ENCODE measurements at regions of chr20 and their contacts with region 1.

Region 1: DNA sequence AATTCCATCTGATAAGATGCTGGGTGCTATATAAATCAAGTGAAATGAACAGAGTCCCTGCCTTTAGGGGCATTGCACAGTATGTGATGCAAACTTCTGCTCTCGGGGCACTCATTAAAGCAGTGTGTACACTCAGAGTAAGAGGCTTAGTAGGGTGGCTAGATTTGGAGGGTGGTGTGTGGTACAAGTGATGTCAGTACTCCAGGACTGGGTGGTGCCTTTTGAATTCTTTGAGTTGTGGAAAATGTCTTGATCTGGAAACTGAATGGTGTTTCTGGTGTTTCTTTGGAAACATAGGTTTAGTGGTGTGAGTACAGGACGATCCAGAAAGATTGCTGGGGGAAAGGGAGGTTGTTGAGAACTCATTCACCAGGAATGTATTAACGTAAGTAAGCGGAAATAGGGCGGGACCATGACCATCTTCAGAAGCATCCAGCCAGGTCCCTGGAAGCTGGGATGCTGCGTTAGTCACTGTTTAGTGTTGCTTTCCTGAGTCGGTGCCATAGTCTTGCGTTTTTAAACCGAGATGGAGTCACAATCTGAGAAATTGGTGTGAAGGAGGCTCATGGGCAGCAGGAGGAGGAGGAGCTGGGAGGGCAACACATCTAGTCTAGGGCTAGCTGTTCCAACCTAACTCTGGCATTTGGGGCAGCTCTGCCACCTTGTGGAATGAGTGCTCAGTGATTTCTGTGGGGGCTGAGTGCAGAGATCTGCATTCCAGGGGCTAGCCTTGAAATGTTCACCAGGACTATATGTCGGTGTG is 70.3 kb downstream of the SCAND1 start:
- DNase-seq: peak; percentile 85
- ATAC-seq: peak; percentile 95
- H3K4me3 ChIP-seq: peak overlapping the region; percentile 15 to 45; a peak in 3 of 4 replicates
- H3K27ac ChIP-seq: peak overlapping the region; percentile 48; the same call in 1 of the 2 replicates
- H3K4me1 ChIP-seq: peaks cover 9 to 29% of the 10 kb centered on the region in 2 experiments
- H3K27me3 ChIP-seq: no peaks in the 10 kb centered on the region
- CTCF ChIP-seq: peak; percentile 63 to 84 (median 83); a peak in 5 of 6 replicates
- POLR2A ChIP-seq: no peak
- RAD21 ChIP-seq: peak; percentile 89

Region 2: DNA sequence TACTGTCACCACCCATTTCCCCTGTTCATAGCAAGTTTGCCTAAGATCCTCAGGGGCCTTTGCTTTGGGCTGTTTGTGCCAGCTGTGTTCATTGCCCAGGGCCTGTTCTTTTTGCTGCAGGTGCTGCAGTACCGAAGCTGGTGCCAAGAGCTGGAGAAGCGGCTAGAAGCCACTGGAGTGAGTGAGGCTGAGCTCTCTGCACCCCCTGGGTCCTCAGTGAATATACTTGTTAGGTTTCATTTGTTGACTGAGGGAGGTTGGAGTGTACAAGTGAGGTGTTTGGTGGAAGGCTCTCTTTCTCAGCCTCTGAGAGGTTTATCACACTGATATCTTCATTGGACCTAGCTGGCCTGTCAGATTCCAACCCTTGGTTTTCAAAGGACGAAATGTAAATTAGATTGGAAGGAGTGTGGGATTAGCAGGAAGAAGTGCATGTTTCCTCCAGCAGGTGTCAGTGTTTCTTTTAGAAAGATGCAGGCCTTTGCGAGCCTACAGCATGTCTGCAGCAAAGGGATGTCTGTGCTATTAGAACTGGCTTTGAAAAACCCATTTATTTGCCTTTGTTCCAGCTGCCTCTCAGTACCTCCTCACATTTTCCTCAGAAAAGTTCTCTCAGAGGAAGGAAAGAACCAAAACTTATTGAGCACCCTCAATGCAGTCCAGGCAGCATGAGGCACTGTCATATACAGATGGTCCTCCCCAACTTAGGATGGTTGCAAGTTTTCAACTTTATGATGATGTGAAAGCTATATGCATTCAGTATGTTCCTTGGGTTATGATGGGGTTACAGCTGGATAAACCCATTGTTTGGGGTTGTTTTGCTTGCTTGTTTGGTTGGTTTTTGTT is 420.3 kb before region 1 on chr20:
- CTCF ChIA-PET with region 1: interaction called, 3 read pairs
- POLR2A ChIA-PET with region 1: no interaction called
- RAD21 ChIA-PET with region 1: no interaction called
- intact Hi-C with region 1: loop called (anchors 5 kb)
- DNase-seq: peak; percentile 40
- ATAC-seq: peak; percentile 87
- H3K4me3 ChIP-seq: no peak overlapping the region
- H3K27ac ChIP-seq: no peak overlapping the region
- H3K4me1 ChIP-seq: peaks cover 21 to 22% of the 10 kb centered on the region in 2 experiments
- H3K27me3 ChIP-seq: no peaks in the 10 kb centered on the region
- CTCF ChIP-seq: peak; percentile 52 to 88 (median 75); a peak in 5 of 6 replicates
- POLR2A ChIP-seq: no peak
- RAD21 ChIP-seq: peak; percentile 77

Region 3: DNA sequence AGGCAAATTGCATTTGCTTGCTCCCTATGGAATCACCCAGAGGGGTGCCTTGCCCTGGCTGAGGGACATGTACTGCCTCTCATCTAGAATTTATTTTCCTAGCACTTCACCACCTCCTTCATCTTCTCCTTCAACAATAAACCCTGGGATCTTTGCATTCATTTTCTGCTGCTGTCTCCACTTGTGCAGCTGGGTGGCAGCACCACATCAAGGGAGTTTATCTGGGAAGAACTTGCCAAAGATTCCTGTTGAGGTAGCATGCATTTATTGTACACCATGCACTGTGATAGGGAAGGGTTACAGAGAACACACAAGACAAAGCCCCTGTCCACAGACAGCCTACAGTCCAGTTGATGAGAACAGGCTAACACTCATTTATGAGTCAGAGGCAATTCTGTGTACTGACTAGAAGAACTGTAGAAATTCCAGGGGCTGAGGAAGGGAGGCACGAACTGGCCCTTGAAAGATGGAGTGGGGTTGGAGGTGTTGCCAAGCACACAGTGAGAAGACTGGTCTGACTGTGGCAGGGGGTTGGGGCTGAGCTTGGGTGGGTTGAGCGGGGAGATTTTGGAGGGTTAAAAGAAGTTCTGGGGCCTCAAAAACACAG is 372.0 kb before region 1 on chr20:
- CTCF ChIA-PET with region 1: no interaction called
- POLR2A ChIA-PET with region 1: interaction called, 4 read pairs
- RAD21 ChIA-PET with region 1: interaction called in 1 of 2 experiments, 3 read pairs
- intact Hi-C with region 1: loop called (anchors 2 kb)
- DNase-seq: no peak
- ATAC-seq: peak; percentile 35; the same call in 1 of the 2 replicates
- H3K4me3 ChIP-seq: no peak overlapping the region
- H3K27ac ChIP-seq: no peak overlapping the region
- H3K4me1 ChIP-seq: peaks cover 13 to 17% of the 10 kb centered on the region in 2 experiments
- H3K27me3 ChIP-seq: no peaks in the 10 kb centered on the region
- CTCF ChIP-seq: peak; percentile 67 to 85 (median 73); a peak in 5 of 6 replicates
- POLR2A ChIP-seq: no peak
- RAD21 ChIP-seq: peak; percentile 91

Measured in HCT116 (cell line).